ENCODE measurements at regions of chr2 and their contacts with region 1.

Region 1: GRCh38 chr2:42086500-42086953 is 38.7 kb downstream of the PKDCC start:
- DNase-seq: no peak
- ATAC-seq: peak; percentile 75

Region 2: GRCh38 chr2:41853427-41854216 is 232.9 kb before region 1 on chr2:
- intact Hi-C with region 1: loop called (anchors 5 kb)
- DNase-seq: no peak
- ATAC-seq: peak; percentile 61

Region 3: DNA sequence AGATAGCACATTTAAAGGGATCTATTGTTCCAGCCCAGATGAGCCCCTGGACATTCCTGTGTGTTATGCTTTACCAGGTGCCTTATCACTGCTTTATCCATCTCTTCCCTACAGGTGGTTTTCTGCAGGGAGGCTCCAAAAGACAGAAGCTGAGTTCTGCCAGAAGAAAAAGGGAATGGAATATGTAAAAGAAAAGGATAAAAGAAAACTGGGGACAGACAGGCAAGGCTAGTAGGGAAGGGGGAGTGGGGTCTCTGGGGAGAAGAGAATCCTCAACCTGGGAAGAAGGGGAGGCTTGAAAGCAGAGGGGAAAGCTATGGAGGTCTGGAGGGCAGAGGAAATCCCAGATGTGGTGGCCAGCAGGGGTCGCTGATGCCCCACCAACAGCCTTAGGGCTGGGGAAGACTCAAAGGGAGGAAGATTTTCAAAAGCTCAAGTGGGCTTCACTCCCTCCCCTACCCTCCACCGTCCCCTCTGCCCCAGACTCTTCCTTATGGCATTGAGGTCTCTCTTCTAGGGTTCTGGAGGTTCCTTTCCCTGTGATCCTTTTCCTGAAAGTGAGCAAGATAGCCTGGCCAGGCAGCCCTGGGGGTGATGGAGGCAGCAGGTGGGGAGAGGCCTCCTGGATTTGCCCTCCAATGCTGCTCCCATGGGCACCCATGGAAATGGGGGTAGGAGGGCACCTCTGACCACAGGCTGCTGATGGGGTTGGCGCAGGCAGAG is 216.8 kb before region 1 on chr2:
- intact Hi-C with region 1: loop called (anchors 2 kb)
- DNase-seq: peak; percentile 85
- ATAC-seq: peak; percentile 92

Region 4: DNA sequence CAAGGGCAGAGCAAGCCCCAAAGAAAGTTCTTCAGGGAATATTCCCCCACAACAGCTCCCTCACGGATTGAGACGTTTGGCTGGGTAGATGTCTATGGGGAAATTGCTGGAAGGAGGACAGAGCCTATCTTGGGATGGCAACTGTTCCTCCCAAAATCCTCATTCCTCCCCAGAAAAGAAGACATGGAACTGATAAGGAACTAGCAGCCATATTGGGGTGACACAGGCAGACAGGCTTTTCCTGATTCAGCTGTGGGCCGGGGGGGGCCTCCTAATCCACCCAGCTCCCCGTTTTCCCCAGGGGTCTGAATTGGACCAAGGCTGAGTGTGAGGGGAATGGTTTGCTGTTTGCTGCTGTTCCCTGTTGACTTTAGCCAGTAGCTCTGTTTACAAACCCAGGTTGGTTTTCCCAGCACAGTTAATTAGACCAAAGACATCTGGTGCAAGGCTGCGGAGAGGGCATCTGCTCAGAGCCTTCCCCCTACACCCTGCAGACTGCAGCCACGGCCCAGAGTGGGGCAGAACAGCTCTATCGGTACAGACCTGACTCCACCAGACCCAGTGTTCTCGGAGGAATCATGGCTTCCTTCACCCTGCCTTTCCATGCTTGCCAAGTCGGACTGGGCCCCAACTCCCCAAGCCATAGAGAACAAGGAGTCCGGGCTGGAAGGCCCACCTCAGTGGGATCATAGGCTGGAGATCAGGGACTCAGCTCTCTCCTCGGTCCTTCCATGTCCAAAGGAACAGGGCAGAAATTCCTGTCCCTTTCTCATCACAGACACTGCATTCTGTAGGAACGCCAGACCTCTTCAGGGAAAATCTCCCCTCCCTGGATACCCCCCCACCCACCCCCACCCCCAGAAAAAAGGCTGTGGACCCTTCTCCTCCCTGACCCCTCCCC is 40.4 kb before region 1 on chr2:
- intact Hi-C with region 1: no loop called
- DNase-seq: no peak
- ATAC-seq: no peak

Region 5: GRCh38 chr2:42274863-42275262 is 188.3 kb after region 1 on chr2:
- intact Hi-C with region 1: no loop called
- DNase-seq: no peak
- ATAC-seq: no peak